Calu3 (cell line): ENCODE measurements at regions of chr10 and their contacts with region 1.

Region 1: DNA sequence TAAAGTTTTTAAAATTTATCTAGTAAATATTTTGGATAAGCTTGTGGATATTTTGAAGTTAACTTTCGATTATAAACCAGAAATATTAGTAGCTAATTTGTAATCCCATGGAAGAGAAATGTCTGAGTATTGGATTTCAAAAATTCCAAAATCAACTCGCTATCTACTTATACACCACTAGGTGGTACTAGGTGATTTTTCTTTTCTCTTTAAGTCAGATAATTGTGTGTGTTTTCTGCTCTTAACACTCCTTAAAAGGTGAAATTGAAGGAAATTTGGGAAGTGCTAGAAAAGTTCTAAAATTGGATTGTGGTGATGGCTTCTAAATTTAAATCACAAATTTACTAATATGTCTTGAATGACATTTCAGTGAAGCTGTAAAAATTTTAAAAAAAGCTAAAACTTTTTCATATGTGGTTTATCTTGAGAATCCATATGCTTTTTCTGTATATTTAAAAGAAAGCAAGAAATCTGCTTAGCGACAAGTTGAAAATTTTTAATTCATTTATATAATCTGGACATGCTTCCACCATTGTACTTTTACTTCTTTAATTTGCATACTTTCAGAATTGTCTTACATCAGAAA is 90.2 kb downstream of the IPMK start:
- DNase-seq: no peak
- H3K4me3 Mint-ChIP-seq: no peak overlapping the region
- H3K27ac Mint-ChIP-seq: no peak overlapping the region
- H3K4me1 Mint-ChIP-seq: peaks cover 33% of the 10 kb centered on the region
- H3K27me3 Mint-ChIP-seq: no peaks in the 10 kb centered on the region
- CTCF ChIP-seq: no peak

Region 2: DNA sequence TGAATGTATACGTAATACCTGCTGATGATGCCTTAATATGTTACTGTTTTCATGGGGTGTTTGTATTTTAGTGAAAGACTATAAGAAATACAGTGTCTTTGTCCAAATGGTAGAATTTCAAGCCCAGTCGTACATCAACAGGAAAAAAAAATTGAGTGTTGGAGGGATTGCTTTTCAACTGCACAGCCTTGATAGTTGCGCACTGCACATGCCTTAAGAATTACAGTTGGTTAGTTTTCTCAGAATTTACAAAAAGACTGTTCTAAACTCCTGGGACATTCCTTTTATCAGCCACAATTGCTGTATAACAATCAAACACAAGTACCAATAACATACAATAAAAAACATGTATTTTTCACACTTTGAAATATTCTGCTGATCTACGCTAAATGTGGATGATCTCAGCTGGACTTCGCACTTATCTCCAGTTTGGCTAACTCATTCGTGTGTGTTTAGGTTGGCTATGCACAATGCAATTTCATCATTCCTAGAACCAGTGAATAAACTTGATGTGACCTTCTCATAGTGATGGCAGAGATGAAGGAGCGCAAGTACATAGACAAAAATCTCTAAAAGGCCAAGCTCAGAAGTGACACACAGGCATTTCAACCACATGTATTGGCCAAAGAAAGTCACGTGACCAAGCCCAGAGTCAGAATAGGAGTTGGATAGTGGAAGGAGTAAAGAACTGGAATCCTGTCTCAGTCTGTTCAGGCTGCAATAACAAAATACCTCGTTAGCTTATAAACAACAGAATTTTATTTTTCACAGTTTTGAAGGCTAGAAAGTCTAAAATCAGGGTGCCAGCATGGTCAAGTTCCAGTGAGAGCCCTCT is 62.0 kb before region 1 on chr10:
- CTCF ChIA-PET with region 1: no interaction called
- intact Hi-C with region 1: no loop called
- DNase-seq: no peak
- H3K4me3 Mint-ChIP-seq: no peak overlapping the region
- H3K27ac Mint-ChIP-seq: no peak overlapping the region
- H3K4me1 Mint-ChIP-seq: no peaks in the 10 kb centered on the region
- H3K27me3 Mint-ChIP-seq: no peaks in the 10 kb centered on the region
- CTCF ChIP-seq: no peak

Region 3: DNA sequence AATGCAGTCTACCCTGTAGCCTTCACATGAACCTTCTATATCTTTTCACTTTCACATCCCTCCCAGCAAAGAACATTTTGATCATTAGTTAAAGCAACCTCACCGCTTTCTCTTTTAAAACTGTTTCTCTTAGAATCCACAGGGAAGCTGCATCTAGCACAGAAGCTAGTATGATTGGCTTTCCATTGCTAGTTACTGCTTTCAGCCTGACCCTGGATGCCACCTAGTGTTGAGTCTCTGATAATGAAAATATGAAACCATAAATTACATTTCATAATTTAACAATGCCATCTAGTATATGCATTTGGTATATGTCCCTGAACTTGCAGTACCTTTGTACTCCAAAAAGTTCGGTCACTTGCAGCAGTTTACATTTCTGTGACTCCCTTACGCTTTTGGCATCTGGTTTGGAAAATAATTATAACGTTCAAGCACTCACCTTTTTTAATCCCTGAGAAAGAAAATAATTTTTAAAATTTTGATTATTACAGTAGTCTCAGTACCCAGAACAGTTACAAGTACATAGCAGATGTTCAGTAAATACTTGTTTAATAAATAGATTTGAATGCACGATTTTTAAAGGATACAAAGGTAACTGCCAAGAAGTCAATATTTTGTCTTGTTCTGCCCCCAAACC is 114.2 kb after region 1 on chr10:
- CTCF ChIA-PET with region 1: interaction called, 64 read pairs
- intact Hi-C with region 1: loop called (anchors 1 kb)
- DNase-seq: peak; percentile 61
- H3K4me3 Mint-ChIP-seq: no peak overlapping the region
- H3K27ac Mint-ChIP-seq: no peak overlapping the region
- H3K4me1 Mint-ChIP-seq: peaks cover 9% of the 10 kb centered on the region
- H3K27me3 Mint-ChIP-seq: no peaks in the 10 kb centered on the region
- CTCF ChIP-seq: peak; percentile 57

Region 4: GRCh38 chr10:58384999-58385783 is 207.7 kb after region 1 on chr10 and contains the start of gene TFAM:
- CTCF ChIA-PET with region 1: interaction called, 5 read pairs
- intact Hi-C with region 1: loop called (anchors 2 kb)
- DNase-seq: peak; percentile 99
- H3K4me3 Mint-ChIP-seq: peak within 1 kb of the TSS; percentile 94
- H3K27ac Mint-ChIP-seq: peak within 1 kb of the TSS; percentile 71
- H3K4me1 Mint-ChIP-seq: peaks cover 21% of the 10 kb centered on the region
- H3K27me3 Mint-ChIP-seq: no peaks in the 10 kb centered on the region
- CTCF ChIP-seq: peak; percentile 86
- total RNA-seq, gene TFAM: 91.8 and 94.3 TPM in 2 replicates